H1 (cell line): ENCODE measurements at regions of chr10 and their contacts with region 1.

Region 1: DNA sequence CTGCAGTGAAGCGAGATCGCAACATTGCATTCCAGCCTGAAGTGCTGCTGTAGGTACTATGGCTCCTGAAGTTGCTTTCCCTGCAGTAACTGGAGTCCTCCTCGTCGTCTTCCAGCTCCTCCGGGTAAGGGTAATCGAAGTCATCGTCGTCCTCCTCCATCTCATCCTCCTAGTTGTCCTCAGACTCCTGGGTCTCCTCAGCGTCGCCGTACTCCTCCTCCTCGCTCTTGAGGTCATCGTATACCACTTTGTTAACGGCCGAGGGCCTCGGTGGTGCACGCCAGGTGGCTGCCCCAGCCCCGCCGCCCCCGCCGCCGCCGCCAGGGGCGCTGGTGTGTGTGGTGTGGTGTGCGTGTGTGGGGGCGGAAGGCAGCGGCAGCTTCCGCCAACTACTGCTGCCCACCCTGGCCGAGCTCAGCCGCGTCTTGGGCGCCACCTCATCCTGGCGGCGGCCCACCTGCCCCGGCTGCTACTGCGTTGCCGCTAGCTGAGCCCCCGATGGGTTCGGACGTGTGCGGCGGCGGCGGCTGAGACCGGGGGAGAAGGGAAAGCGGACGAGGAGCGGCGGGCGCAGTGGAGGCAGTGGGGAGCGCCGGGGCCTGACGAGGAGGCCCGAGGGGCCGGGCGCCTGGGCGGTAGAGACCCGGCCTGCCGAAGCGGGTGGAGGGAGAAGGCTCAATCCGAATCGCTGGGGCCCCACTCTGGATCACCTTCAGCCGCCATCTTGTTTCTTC is 11.8 kb upstream of the ACBD5 start:
- DNase-seq: peak in 1 of 2 experiments; percentile 96
- H3K4me3 ChIP-seq: peak overlapping the region; percentile 33 to 66 (median 34); a peak in 6 of 8 replicates
- H3K27ac ChIP-seq: peak overlapping the region; percentile 70; the same call in 1 of the 2 replicates
- H3K4me1 ChIP-seq: peaks cover 0 to 4% (median 0%) of the 10 kb centered on the region in 4 experiments; a peak in 2 of 7 replicates
- H3K27me3 ChIP-seq: peaks cover 0 to 2% (median 1%) of the 10 kb centered on the region in 4 experiments; a peak in 5 of 7 replicates
- CTCF ChIP-seq: peak; percentile 25 to 57 (median 36); a peak in 3 of 4 replicates
- EP300 ChIP-seq: no peak
- POLR2A ChIP-seq: peak; percentile 58 to 72; a peak in 2 of 3 replicates
- RAD21 ChIP-seq: peak; percentile 17 to 30; a peak in 2 of 4 replicates

Region 2: DNA sequence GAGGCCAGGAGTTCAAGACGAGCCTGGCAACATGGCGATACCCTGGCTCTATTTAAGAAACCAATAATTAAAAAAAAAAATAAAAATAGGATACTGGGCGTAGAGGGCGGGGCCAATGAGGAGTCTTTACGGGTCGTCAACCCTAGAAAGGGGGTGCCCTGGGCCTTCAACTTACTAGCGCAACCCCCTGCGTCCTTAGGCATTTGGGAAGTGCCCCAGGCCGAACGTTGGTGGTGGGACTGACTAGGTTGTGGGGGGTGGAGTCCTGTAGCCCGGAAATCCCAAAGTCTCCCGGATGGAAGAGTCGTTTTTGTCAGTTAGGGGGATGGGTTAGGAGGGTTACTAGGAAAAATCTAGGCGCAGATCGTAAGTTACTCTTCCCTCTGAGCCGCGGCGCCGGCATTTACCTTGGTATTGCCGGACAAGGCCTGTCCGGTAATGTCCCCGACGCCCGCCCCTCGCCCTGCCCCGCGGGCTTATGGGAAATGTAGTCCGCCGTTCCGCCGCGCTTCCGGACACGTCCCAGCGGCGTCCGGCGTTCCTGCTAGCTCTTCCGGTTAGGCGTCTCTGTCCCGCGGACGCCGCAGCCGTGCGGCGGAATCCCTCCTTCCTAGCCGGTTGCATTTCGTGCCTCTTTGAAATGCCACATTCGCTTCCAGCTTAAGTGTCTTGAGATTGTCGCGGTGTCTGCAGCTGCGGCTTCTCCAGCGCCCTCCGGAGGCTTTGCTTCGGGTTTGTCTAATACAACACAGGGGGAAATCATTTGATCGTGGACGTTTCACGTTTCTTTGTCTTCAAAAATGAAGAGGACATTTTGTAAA is 10.6 kb before region 1 on chr10:
- CTCF ChIA-PET with region 1: interaction called, 21 read pairs
- POLR2A ChIA-PET with region 1: interaction called, 14 read pairs
- DNase-seq: peak; percentile 87 to 88
- H3K4me3 ChIP-seq: peak overlapping the region; percentile 69 to 95 (median 86)
- H3K27ac ChIP-seq: peak overlapping the region; percentile 38; the same call in 1 of the 2 replicates
- H3K4me1 ChIP-seq: peaks cover 0 to 8% (median 2%) of the 10 kb centered on the region in 4 experiments; a peak in 5 of 7 replicates
- H3K27me3 ChIP-seq: no peaks in the 10 kb centered on the region
- CTCF ChIP-seq: peak; percentile 14 to 49 (median 34); a peak in 2 of 4 replicates
- EP300 ChIP-seq: peak in 1 of 2 experiments; percentile 44; a peak in 1 of 3 replicates
- POLR2A ChIP-seq: peak; percentile 46 to 69
- RAD21 ChIP-seq: peak in 1 of 2 experiments; percentile 27; a peak in 2 of 4 replicates

Region 3: GRCh38 chr10:27390681-27391080 is 138.2 kb after region 1 on chr10:
- CTCF ChIA-PET with region 1: no interaction called
- POLR2A ChIA-PET with region 1: no interaction called
- DNase-seq: no peak
- H3K4me3 ChIP-seq: no peak overlapping the region
- H3K27ac ChIP-seq: no peak overlapping the region
- H3K4me1 ChIP-seq: peaks cover 0 to 3% (median 1%) of the 10 kb centered on the region in 4 experiments; a peak in 4 of 7 replicates
- H3K27me3 ChIP-seq: no peaks in the 10 kb centered on the region
- CTCF ChIP-seq: no peak
- EP300 ChIP-seq: no peak
- POLR2A ChIP-seq: no peak
- RAD21 ChIP-seq: no peak